ENCODE measurements at regions of chrX and their contacts with region 1.

Region 1: GRCh38 chrX:148609515-148610327 is 109.3 kb downstream of the AFF2 start:
- DNase-seq: no peak
- H3K4me3 Mint-ChIP-seq: no peak overlapping the region
- H3K27ac Mint-ChIP-seq: peak overlapping the region; percentile 17
- H3K4me1 Mint-ChIP-seq: peaks cover 26% of the 10 kb centered on the region
- H3K27me3 Mint-ChIP-seq: no peaks in the 10 kb centered on the region

Region 2: GRCh38 chrX:148380107-148380506 is 229.6 kb before region 1 on chrX:
- intact Hi-C with region 1: no loop called
- DNase-seq: no peak
- H3K4me3 Mint-ChIP-seq: peak overlapping the region; percentile 33
- H3K27ac Mint-ChIP-seq: peak overlapping the region; percentile 88
- H3K4me1 Mint-ChIP-seq: peaks cover 24% of the 10 kb centered on the region
- H3K27me3 Mint-ChIP-seq: no peaks in the 10 kb centered on the region

Region 3: DNA sequence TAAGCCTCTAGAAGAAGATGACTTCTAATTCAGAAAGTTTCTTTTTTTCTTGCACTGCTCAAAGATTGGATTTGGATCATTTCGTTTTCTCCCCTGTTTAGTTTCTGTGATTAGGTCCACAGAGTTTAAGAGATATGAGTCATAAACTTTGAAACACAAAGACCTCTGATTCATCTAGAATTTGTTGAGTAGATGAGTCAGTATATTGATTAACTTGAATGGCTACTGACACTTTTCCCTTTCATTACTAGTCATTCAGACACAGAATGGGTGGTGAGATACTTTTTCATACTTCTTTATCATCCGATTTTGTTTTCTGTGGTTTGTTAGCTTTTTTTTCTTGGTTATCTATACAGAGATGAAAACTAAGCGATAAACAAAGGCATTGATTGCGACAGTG is 143.4 kb before region 1 on chrX:
- intact Hi-C with region 1: loop called (anchors 1 kb)
- DNase-seq: no peak
- H3K4me3 Mint-ChIP-seq: no peak overlapping the region
- H3K27ac Mint-ChIP-seq: no peak overlapping the region
- H3K4me1 Mint-ChIP-seq: peaks cover 8% of the 10 kb centered on the region
- H3K27me3 Mint-ChIP-seq: peaks cover 13% of the 10 kb centered on the region

Region 4: DNA sequence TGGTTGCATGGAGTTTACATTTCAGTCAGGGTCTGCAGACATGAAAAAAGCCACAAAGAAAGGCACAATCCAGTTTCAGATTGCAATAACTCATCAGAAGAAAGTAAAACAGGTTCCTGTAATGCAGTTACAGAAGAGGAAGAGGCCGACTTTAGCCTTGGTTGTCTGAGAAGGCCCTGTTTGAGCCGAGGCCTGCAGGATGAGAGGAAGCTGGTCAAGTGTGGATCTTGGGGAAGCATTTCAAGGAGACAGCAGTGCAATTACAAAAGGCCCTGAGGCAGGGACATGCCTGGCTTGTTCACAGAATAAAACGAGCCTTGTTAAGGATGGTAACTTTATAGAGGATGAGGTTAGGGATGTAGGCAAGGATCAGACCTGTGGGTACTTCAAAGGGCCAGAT is 46.9 kb before region 1 on chrX:
- intact Hi-C with region 1: no loop called
- DNase-seq: no peak
- H3K4me3 Mint-ChIP-seq: no peak overlapping the region
- H3K27ac Mint-ChIP-seq: no peak overlapping the region
- H3K4me1 Mint-ChIP-seq: peaks cover 3% of the 10 kb centered on the region
- H3K27me3 Mint-ChIP-seq: no peaks in the 10 kb centered on the region